GM18951 (cell line): ENCODE measurements at regions of chr17 and their contacts with region 1.

Region 1: DNA sequence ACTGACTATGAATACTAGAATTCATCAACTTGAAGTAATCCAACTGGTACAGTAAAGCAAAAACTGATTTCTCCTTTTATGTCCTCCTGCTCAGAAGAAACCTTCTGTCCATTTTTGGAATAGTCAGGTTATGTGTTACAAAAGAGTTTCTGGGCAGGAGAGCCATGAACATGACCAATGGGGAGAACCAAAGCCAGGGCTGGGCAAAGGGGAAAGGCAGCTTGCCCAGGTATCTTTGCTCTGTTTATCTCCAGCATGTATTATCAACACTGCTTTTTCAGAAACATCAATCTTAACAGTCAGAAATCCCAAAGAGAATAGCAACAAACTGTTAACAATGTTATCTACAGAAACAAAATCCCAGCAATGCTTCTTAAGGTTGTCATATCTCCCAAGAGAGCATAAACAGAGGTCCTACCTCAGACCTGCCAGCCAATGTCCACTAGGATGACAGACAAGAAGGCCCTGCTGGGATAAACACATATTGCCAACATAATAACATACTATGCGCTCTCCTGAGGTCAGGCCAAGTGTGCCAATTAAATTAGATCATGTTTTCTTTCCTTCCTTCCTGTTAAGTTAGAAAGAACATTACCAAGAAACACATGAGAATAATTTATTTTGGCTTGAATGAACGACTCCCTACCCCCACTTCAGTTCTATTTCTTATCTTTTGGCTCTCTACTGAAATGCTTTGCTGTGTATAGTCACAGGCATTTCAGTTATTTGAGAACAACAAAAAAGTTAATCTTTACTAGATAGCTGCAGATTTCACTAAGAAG is 28.0 kb downstream of the BLMH start:
- POLR2A ChIP-seq: no peak

Region 2: GRCh38 chr17:30124273-30124796 is 139.4 kb before region 1 on chr17:
- in situ Hi-C with region 1: loop called (anchors 10 kb)
- POLR2A ChIP-seq: no peak